ENCODE measurements at regions of chr1 and their contacts with region 1.

Region 1: DNA sequence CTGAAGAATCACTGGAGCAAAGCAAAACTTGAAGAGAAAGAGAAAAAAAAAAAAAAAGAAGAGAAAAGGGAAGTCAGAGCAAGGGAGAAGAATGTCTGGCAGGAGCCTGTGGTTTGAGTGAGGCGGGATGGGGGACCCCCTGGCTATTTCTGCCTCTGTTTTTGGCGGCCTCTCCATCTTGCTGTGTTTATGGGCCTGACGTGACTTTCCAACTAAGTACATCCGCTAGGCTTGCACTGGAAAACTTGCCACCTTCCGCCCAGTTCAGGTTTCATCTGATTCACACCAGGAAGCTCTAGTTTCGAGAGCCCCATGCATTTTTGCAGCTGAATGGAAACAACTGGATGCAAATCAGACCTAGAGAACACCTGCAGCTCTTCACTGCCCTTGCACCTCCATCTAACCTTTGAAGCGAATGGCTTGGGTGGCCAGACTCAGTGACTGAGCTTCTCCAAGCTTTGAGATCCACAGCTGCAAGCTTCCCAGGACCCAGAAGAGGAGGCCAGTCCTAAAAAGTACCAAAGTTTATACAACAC is 28.0 kb downstream of the TBX15 start:
- DNase-seq: peak; percentile 46
- ATAC-seq: peak; percentile 79
- H3K4me3 ChIP-seq: no peak overlapping the region
- H3K27ac ChIP-seq: no peak overlapping the region
- H3K4me1 ChIP-seq: peaks cover 11% of the 10 kb centered on the region
- H3K27me3 ChIP-seq: no peaks in the 10 kb centered on the region
- CTCF ChIP-seq: no peak
- EP300 ChIP-seq: peak in 1 of 2 experiments; percentile 42; a peak in 1 of 4 replicates
- POLR2A ChIP-seq: no peak
- RAD21 ChIP-seq: no peak

Region 2: GRCh38 chr1:118918230-118918939 is 41.7 kb before region 1 on chr1:
- CTCF ChIA-PET with region 1: no interaction called
- POLR2A ChIA-PET with region 1: interaction called, 3 read pairs
- RAD21 ChIA-PET with region 1: interaction called, 6 read pairs
- SMC1A ChIA-PET with region 1: interaction called, 5 read pairs
- in situ Hi-C with region 1: loop called (anchors 5 kb)
- intact Hi-C with region 1: loop called (anchors 5 kb)
- DNase-seq: peak; percentile 40
- ATAC-seq: peak; percentile 64
- H3K4me3 ChIP-seq: no peak overlapping the region
- H3K27ac ChIP-seq: no peak overlapping the region; the same call in 1 of the 2 replicates
- H3K4me1 ChIP-seq: peaks cover 2% of the 10 kb centered on the region; the same call in 1 of the 2 replicates
- H3K27me3 ChIP-seq: no peaks in the 10 kb centered on the region
- CTCF ChIP-seq: no peak
- EP300 ChIP-seq: peak; percentile 80; a peak in 2 of 4 replicates
- POLR2A ChIP-seq: no peak
- RAD21 ChIP-seq: no peak

Region 3: DNA sequence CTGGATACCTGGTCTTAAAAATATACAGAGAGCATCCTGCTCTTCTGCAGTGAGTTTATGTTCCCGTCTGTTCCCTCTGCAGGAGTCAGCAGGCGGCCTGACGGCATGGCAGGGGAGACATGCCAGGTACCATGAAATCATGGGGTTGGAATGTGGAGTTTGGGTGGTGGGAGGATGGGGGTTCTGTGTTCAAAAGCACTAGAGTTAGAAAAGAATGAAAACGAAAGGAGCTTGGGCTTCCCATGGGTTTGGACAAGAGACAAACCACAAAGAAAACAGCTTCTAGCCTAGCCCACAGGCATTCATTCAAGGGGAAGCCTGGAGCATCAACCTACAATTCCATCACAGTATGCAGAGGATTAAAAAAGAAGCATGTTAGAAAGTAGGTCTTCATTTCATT is 120.5 kb after region 1 on chr1:
- CTCF ChIA-PET with region 1: no interaction called
- POLR2A ChIA-PET with region 1: no interaction called
- RAD21 ChIA-PET with region 1: no interaction called
- SMC1A ChIA-PET with region 1: no interaction called
- in situ Hi-C with region 1: no loop called
- intact Hi-C with region 1: no loop called
- DNase-seq: no peak
- ATAC-seq: no peak
- H3K4me3 ChIP-seq: no peak overlapping the region
- H3K27ac ChIP-seq: no peak overlapping the region
- H3K4me1 ChIP-seq: no peaks in the 10 kb centered on the region
- H3K27me3 ChIP-seq: no peaks in the 10 kb centered on the region
- CTCF ChIP-seq: no peak
- EP300 ChIP-seq: no peak
- POLR2A ChIP-seq: no peak
- RAD21 ChIP-seq: no peak

Region 4: GRCh38 chr1:119310301-119310700 is 350.2 kb after region 1 on chr1:
- CTCF ChIA-PET with region 1: no interaction called
- POLR2A ChIA-PET with region 1: no interaction called
- RAD21 ChIA-PET with region 1: no interaction called
- SMC1A ChIA-PET with region 1: no interaction called
- in situ Hi-C with region 1: no loop called
- intact Hi-C with region 1: no loop called
- DNase-seq: no peak
- ATAC-seq: no peak
- H3K4me3 ChIP-seq: no peak overlapping the region
- H3K27ac ChIP-seq: no peak overlapping the region
- H3K4me1 ChIP-seq: no peaks in the 10 kb centered on the region
- H3K27me3 ChIP-seq: peaks cover 0 to 5% of the 10 kb centered on the region in 2 experiments; a peak in 1 of 4 replicates
- CTCF ChIP-seq: no peak
- EP300 ChIP-seq: no peak
- POLR2A ChIP-seq: no peak
- RAD21 ChIP-seq: no peak